ENCODE measurements at regions of chr1 and their contacts with region 1.

Region 1: GRCh38 chr1:86704458-86704971 is at the start of gene SH3GLB1:
- DNase-seq: peak; percentile 93 to 97
- ATAC-seq: peak; percentile 97
- H3K4me3 ChIP-seq: peak within 1 kb of the TSS; percentile 74 to 88
- H3K27ac ChIP-seq: peak within 1 kb of the TSS; percentile 87 to 93
- H3K4me1 ChIP-seq: peaks cover 2% of the 10 kb centered on the region in 2 donors
- H3K27me3 ChIP-seq: no peaks in the 10 kb centered on the region
- total RNA-seq, gene SH3GLB1: 92.4 to 103 TPM

Region 2: DNA sequence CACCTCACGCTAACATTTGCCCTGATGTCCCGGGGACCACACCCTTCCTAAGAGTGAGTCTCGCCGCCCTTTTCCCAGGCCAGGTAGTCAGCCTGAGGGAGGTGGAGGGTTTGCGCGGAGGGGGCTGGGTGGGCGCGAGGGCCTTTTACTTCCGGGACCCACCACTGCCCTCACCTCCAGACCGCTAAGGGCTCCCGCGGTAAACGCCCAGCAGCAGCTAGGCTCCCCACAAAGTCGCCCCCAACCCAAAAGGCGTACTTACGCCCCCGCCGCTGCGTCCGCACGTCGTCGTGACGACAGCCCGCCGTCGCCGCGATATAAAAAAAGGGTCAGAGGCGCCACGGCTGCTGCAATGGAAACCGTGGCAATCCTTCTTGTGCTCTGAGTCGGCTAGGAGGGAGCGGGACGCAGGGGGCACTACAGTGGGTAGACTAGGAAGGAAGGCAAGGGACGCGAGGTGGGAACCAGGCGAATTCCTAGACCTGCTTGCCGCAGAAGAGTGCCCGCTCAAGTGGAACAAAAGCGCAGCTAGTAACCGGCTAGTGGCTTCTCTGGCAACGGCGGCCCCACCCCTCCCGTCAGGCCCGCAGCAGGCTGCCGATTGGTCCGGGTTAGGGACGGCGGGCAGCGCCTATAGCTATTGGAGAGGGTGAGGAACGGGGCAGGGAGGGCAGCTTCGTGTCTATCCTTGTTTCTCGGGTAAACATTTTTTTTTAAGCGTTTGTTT is 308.6 kb before region 1 on chr1 and contains the start of gene ODF2L:
- intact Hi-C with region 1: loop called in 1 of 2 experiments (anchors 10 kb)
- DNase-seq: peak; percentile 94 to 96
- ATAC-seq: peak; percentile 99
- H3K4me3 ChIP-seq: peak within 1 kb of the TSS; percentile 81 to 90
- H3K27ac ChIP-seq: peak within 1 kb of the TSS in 1 of 2 donors; percentile 37
- H3K4me1 ChIP-seq: peaks cover 0 to 2% of the 10 kb centered on the region in 2 donors
- H3K27me3 ChIP-seq: no peaks in the 10 kb centered on the region
- total RNA-seq, gene ODF2L: 39.4 to 73.4 TPM

Region 3: DNA sequence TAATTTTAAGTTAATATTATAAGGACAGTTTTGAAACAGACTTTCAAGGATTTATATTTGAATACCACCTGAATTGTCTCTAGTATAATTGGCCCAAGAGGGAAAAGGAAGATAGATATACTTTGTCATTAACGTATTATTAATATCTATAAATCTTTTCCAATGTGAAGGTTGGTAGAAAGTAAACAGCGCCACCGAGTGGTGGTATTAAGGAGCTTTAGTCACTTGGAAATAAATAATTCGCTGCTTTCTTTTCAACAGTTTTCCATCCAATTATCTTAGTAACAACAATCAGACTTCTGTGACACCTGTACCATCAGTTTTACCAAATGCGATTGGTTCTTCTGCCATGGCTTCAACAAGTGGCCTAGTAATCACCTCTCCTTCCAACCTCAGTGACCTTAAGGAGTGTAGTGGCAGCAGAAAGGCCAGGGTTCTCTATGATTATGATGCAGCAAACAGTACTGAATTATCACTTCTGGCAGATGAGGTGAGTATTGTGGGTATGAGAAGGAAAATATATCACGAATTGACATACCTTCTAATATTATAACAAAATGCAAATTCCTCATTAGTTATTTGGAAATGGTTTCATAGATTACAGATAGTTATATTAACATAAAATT is 37.5 kb after region 1 on chr1:
- intact Hi-C with region 1: loop called in 1 of 2 experiments (anchors 5 kb)
- DNase-seq: no peak
- ATAC-seq: no peak
- H3K4me3 ChIP-seq: no peak overlapping the region
- H3K27ac ChIP-seq: no peak overlapping the region
- H3K4me1 ChIP-seq: no peaks in the 10 kb centered on the region
- H3K27me3 ChIP-seq: no peaks in the 10 kb centered on the region

Region 4: GRCh38 chr1:86757272-86757984 is 52.9 kb after region 1 on chr1:
- intact Hi-C with region 1: loop called in 1 of 2 experiments (anchors 5 kb)
- DNase-seq: peak in 1 of 2 donors; percentile 69
- ATAC-seq: peak; percentile 56
- H3K4me3 ChIP-seq: no peak overlapping the region
- H3K27ac ChIP-seq: peak overlapping the region in 1 of 2 donors; percentile 68
- H3K4me1 ChIP-seq: no peaks in the 10 kb centered on the region
- H3K27me3 ChIP-seq: no peaks in the 10 kb centered on the region

Region 5: GRCh38 chr1:86774305-86775295 is 70.1 kb after region 1 on chr1:
- intact Hi-C with region 1: loop called in 1 of 2 experiments (anchors 5 kb)
- DNase-seq: peak in 1 of 2 donors; percentile 87
- ATAC-seq: peak; percentile 69
- H3K4me3 ChIP-seq: no peak overlapping the region
- H3K27ac ChIP-seq: no peak overlapping the region
- H3K4me1 ChIP-seq: peaks cover 2 to 5% of the 10 kb centered on the region in 2 donors
- H3K27me3 ChIP-seq: no peaks in the 10 kb centered on the region

Region 6: GRCh38 chr1:86913896-86914634 is 209.6 kb after region 1 on chr1 and contains the start of gene SELENOF:
- intact Hi-C with region 1: loop called (anchors 1 to 10 kb)
- DNase-seq: peak; percentile 99 to 100
- ATAC-seq: peak; percentile 99
- H3K4me3 ChIP-seq: peak within 1 kb of the TSS; percentile 96 to 100
- H3K27ac ChIP-seq: peak within 1 kb of the TSS; percentile 41 to 61
- H3K4me1 ChIP-seq: peaks cover 1 to 5% of the 10 kb centered on the region in 2 donors
- H3K27me3 ChIP-seq: no peaks in the 10 kb centered on the region
- total RNA-seq, gene SELENOF: 145 to 169 TPM